H1 (cell line): ENCODE measurements at regions of chr5 and their contacts with region 1.

Region 1: DNA sequence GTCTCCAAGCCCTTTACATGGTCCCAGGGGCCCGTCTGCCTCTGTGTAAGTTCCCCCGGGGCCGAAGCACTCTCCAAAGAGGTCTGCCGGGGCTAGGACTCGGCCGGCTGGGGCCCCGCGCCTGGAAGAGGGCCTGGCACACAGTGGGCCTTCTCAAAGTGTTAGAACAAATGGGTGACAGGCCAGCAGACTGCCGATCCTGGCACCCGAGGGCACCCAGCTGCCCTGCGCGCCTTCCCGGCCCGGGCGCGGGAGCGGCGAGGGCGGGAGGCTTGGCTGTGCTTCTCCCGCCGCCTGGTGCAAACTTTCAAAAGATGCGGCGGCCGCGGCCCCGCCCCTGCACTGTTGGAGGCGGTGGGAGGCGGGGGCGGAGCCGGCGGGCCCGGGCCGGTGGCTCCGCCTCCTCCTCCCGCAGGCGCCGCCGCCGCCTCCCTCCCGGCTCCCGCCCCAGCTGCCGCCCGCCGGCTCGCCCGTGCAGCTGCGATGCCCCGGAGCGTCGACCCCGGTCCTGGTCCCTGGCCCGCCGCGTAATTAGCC is at the start of gene NEURL1B:
- DNase-seq: peak in 1 of 2 experiments; percentile 87
- H3K4me3 ChIP-seq: peak within 1 kb of the TSS; percentile 60 to 87 (median 68)
- H3K27ac ChIP-seq: no peak within 1 kb of the TSS
- H3K4me1 ChIP-seq: peaks cover 0 to 22% (median 7%) of the 10 kb centered on the region in 4 experiments; a peak in 3 of 7 replicates
- H3K27me3 ChIP-seq: peaks cover 0 to 24% (median 15%) of the 10 kb centered on the region in 4 experiments; a peak in 6 of 7 replicates
- CTCF ChIP-seq: peak in 1 of 3 experiments; percentile 4; a peak in 1 of 4 replicates
- EP300 ChIP-seq: no peak
- POLR2A ChIP-seq: no peak
- RAD21 ChIP-seq: no peak; a peak in 1 of 4 replicates
- total RNA-seq, gene NEURL1B: 5.7 and 6.1 TPM in 2 replicates

Region 2: GRCh38 chr5:172616730-172617129 is 24.2 kb before region 1 on chr5:
- CTCF ChIA-PET with region 1: interaction called, 11 read pairs
- POLR2A ChIA-PET with region 1: interaction called, 3 read pairs
- DNase-seq: no peak
- H3K4me3 ChIP-seq: no peak overlapping the region
- H3K27ac ChIP-seq: no peak overlapping the region
- H3K4me1 ChIP-seq: 0 out of 7 replicates have a peak, but pooled peaks cover 0 to under 1% (median 0%) of the 10 kb centered on the region in 4 experiments
- H3K27me3 ChIP-seq: no peaks in the 10 kb centered on the region; a peak in 1 of 7 replicates
- CTCF ChIP-seq: no peak
- EP300 ChIP-seq: no peak
- POLR2A ChIP-seq: no peak
- RAD21 ChIP-seq: no peak

Region 3: GRCh38 chr5:172659909-172660628 is 19.2 kb after region 1 on chr5:
- CTCF ChIA-PET with region 1: interaction called, 164 read pairs
- POLR2A ChIA-PET with region 1: interaction called, 3 read pairs
- DNase-seq: no peak
- H3K4me3 ChIP-seq: no peak overlapping the region
- H3K27ac ChIP-seq: no peak overlapping the region; the same call in 1 of the 2 replicates
- H3K4me1 ChIP-seq: peaks cover 0 to 2% (median 0%) of the 10 kb centered on the region in 4 experiments; a peak in 2 of 7 replicates
- H3K27me3 ChIP-seq: no peaks in the 10 kb centered on the region
- CTCF ChIP-seq: peak in 2 of 3 experiments; percentile 2 to 6; a peak in 2 of 4 replicates
- EP300 ChIP-seq: no peak
- POLR2A ChIP-seq: no peak
- RAD21 ChIP-seq: peak; percentile 9 to 22; a peak in 2 of 4 replicates

Region 4: GRCh38 chr5:172806897-172807672 is 166.2 kb after region 1 on chr5:
- CTCF ChIA-PET with region 1: no interaction called
- POLR2A ChIA-PET with region 1: no interaction called
- DNase-seq: peak; percentile 49 to 67
- H3K4me3 ChIP-seq: peak overlapping the region in 1 of 4 experiments; percentile 23; a peak in 1 of 8 replicates
- H3K27ac ChIP-seq: no peak overlapping the region
- H3K4me1 ChIP-seq: no peaks in the 10 kb centered on the region; a peak in 1 of 7 replicates
- H3K27me3 ChIP-seq: peaks cover 0 to 2% (median 0%) of the 10 kb centered on the region in 4 experiments; a peak in 1 of 7 replicates
- CTCF ChIP-seq: no peak
- EP300 ChIP-seq: no peak
- POLR2A ChIP-seq: no peak
- RAD21 ChIP-seq: no peak; a peak in 1 of 4 replicates